ENCODE measurements at regions of chr17 and their contacts with region 1.

Region 1: GRCh38 chr17:78745407-78746088 is 36.5 kb downstream of the CYTH1 start:
- DNase-seq: peak; percentile 56
- H3K4me3 Mint-ChIP-seq: peak overlapping the region; percentile 44
- H3K27ac Mint-ChIP-seq: peak overlapping the region; percentile 90
- H3K4me1 Mint-ChIP-seq: peaks cover 91% of the 10 kb centered on the region
- H3K27me3 Mint-ChIP-seq: no peaks in the 10 kb centered on the region

Region 2: GRCh38 chr17:78598013-78598471 is 147.5 kb before region 1 on chr17:
- CTCF ChIA-PET with region 1: no interaction called
- POLR2A ChIA-PET with region 1: no interaction called
- DNase-seq: no peak
- H3K4me3 Mint-ChIP-seq: no peak overlapping the region
- H3K27ac Mint-ChIP-seq: no peak overlapping the region
- H3K4me1 Mint-ChIP-seq: peaks cover 10% of the 10 kb centered on the region
- H3K27me3 Mint-ChIP-seq: peaks cover 11% of the 10 kb centered on the region

Region 3: GRCh38 chr17:78723001-78723796 is 22.3 kb before region 1 on chr17:
- CTCF ChIA-PET with region 1: interaction called, 7 read pairs
- POLR2A ChIA-PET with region 1: interaction called, 22 read pairs
- DNase-seq: no peak
- H3K4me3 Mint-ChIP-seq: no peak overlapping the region
- H3K27ac Mint-ChIP-seq: no peak overlapping the region
- H3K4me1 Mint-ChIP-seq: peaks cover 92% of the 10 kb centered on the region
- H3K27me3 Mint-ChIP-seq: no peaks in the 10 kb centered on the region

Region 4: GRCh38 chr17:78769196-78769773 is 23.7 kb after region 1 on chr17:
- CTCF ChIA-PET with region 1: interaction called, 40 read pairs
- POLR2A ChIA-PET with region 1: interaction called, 861 read pairs
- DNase-seq: no peak
- H3K4me3 Mint-ChIP-seq: no peak overlapping the region
- H3K27ac Mint-ChIP-seq: no peak overlapping the region
- H3K4me1 Mint-ChIP-seq: peaks cover 48% of the 10 kb centered on the region
- H3K27me3 Mint-ChIP-seq: no peaks in the 10 kb centered on the region

Region 5: GRCh38 chr17:78806451-78806850 is 60.9 kb after region 1 on chr17:
- CTCF ChIA-PET with region 1: interaction called, 4 read pairs
- POLR2A ChIA-PET with region 1: interaction called, 12 read pairs
- DNase-seq: no peak
- H3K4me3 Mint-ChIP-seq: no peak overlapping the region
- H3K27ac Mint-ChIP-seq: peak overlapping the region; percentile 95
- H3K4me1 Mint-ChIP-seq: peaks cover 63% of the 10 kb centered on the region
- H3K27me3 Mint-ChIP-seq: no peaks in the 10 kb centered on the region

Measured in activated CD4-positive, alpha-beta memory T cell treated with anti-CD3 and anti-CD28 coated beads, Interleukin-2, amount 10 ng/mL, durations not matched to agents 7 days and 5 days (primary cell).